ENCODE measurements at regions of chr15 and their contacts with region 1.

Region 1: DNA sequence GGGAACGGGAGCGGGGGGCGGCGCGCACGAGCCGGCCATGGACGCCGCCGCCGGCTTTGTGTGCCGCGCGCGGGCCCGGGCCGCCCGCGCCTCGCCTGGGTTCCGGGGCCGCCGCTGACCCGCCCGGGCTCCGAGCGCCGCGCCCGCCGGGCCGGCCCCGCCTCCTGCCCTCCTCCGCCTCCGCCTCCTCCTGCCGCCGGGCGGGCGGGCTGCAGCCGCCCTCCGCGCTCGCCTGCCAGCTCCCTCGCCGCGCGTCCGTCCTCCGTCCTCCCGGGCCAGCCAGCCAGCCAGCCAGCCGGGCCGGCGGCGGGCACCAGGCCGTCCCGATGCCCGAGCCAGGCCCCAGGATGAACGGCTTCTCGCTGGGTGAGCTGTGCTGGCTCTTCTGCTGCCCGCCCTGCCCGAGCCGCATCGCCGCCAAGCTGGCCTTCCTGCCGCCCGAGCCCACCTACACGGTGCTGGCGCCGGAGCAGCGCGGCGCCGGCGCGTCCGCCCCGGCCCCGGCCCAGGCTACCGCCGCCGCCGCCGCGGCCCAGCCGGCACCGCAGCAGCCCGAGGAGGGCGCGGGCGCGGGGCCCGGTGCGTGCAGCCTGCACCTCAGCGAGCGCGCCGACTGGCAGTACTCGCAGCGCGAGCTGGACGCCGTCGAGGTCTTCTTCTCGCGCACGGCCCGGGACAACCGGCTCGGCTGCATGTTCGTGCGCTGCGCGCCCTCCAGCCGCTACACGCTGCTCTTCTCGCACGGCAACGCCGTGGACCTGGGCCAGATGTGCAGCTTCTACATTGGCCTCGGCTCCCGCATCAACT is at the start of gene ABHD17C:
- DNase-seq: peak; percentile 18 to 61
- H3K4me3 ChIP-seq: peak within 1 kb of the TSS; percentile 76 to 89 (median 78)
- H3K27ac ChIP-seq: peak within 1 kb of the TSS; percentile 75 to 88
- H3K4me1 ChIP-seq: peaks cover 0 to 6% of the 10 kb centered on the region in 2 donors
- H3K27me3 ChIP-seq: no peaks in the 10 kb centered on the region
- CTCF ChIP-seq: no peak
- POLR2A ChIP-seq: no peak
- total RNA-seq, gene ABHD17C: 1.3 to 5.2 (median 5.1) TPM

Region 2: GRCh38 chr15:82679626-82680199 is 1984.4 kb after region 1 on chr15:
- intact Hi-C with region 1: loop called (anchors 10 kb)
- DNase-seq: no peak
- H3K4me3 ChIP-seq: peak overlapping the region in 2 of 3 donors; percentile 72 to 74
- H3K27ac ChIP-seq: peak overlapping the region in 1 of 2 donors; percentile 84
- H3K4me1 ChIP-seq: no peaks in the 10 kb centered on the region
- H3K27me3 ChIP-seq: no peaks in the 10 kb centered on the region
- CTCF ChIP-seq: no peak
- POLR2A ChIP-seq: no peak